CD8-positive, alpha-beta T cell (primary cell): ENCODE measurements at regions of chr21 and their contacts with region 1.

Region 1: DNA sequence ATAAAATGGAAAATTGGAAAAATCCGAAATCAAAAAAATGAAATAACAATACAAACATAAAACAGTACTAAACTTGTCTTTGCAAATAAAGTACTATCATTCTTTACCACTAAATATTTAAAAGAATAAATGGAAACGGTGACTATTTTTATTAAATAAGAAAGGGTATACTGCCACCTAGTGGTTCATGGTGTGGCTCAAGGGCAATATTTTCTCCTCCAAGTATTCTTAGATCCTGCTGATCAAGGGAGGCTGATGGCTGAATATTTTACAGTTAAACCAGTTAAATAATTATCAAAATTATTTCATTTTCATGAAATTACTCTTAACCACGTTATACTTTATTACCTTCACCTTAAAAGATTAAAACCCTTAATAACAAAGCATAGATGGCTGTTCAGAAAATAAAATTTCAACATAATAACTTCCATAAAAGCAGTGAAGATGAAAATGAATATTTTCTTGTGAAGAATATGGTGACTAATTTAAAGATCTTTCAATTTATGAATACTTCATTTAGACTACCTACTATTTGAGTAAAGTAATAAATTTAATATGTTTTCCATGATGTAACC is 1793.9 kb downstream of the NCAM2 start:
- DNase-seq: peak in 3 of 9 experiments; percentile 11 to 50 (median 32)
- ATAC-seq: peak; percentile 36
- H3K4me3 ChIP-seq: no peak overlapping the region
- H3K4me3 Mint-ChIP-seq: no peak overlapping the region
- H3K27ac ChIP-seq: no peak overlapping the region
- H3K27ac Mint-ChIP-seq: no peak overlapping the region
- H3K4me1 ChIP-seq: no peaks in the 10 kb centered on the region
- H3K4me1 Mint-ChIP-seq: no peaks in the 10 kb centered on the region
- H3K27me3 ChIP-seq: no peaks in the 10 kb centered on the region
- H3K27me3 Mint-ChIP-seq: no peaks in the 10 kb centered on the region
- CTCF ChIP-seq: peak; percentile 86

Region 2: DNA sequence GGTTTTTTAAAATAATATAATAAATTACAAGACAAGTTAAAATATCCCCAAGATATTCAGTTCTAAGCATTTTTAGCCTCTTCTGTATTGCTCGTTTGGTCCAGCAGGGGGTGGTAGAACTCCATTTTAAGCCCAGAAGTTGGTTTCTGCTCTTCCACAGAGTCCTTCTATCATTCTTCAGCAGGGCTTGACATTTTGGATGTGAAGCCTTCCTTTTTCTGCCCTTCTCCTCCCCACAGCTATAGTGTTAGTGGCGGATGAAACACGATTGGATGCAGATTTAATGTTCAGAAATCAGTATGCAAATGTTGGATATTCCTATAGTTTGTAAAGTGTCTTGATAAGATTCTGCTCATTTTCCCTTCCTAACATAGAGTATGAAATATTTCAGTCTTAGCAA is 1792.4 kb before region 1 on chr21:
- CTCF ChIA-PET with region 1: no interaction called
- POLR2A ChIA-PET with region 1: no interaction called
- intact Hi-C with region 1: loop called (anchors 5 kb)
- DNase-seq: peak in 3 of 9 experiments; percentile 15 to 36 (median 36)
- ATAC-seq: no peak
- H3K4me3 ChIP-seq: no peak overlapping the region
- H3K4me3 Mint-ChIP-seq: no peak overlapping the region
- H3K27ac ChIP-seq: no peak overlapping the region
- H3K27ac Mint-ChIP-seq: no peak overlapping the region
- H3K4me1 ChIP-seq: peaks cover 18% of the 10 kb centered on the region
- H3K4me1 Mint-ChIP-seq: peaks cover 13% of the 10 kb centered on the region
- H3K27me3 ChIP-seq: peaks cover 0 to 2% of the 10 kb centered on the region in 2 experiments
- H3K27me3 Mint-ChIP-seq: peaks cover 25% of the 10 kb centered on the region
- CTCF ChIP-seq: peak; percentile 46

Region 3: GRCh38 chr21:21163904-21164303 is 1628.2 kb before region 1 on chr21:
- CTCF ChIA-PET with region 1: interaction called, 4 read pairs
- POLR2A ChIA-PET with region 1: no interaction called
- intact Hi-C with region 1: loop called in 1 of 2 experiments (anchors 1 kb)
- DNase-seq: peak in 7 of 9 experiments; percentile 1 to 57 (median 23)
- ATAC-seq: no peak
- H3K4me3 ChIP-seq: no peak overlapping the region
- H3K4me3 Mint-ChIP-seq: no peak overlapping the region
- H3K27ac ChIP-seq: no peak overlapping the region
- H3K27ac Mint-ChIP-seq: no peak overlapping the region
- H3K4me1 ChIP-seq: no peaks in the 10 kb centered on the region
- H3K4me1 Mint-ChIP-seq: no peaks in the 10 kb centered on the region
- H3K27me3 ChIP-seq: no peaks in the 10 kb centered on the region
- H3K27me3 Mint-ChIP-seq: no peaks in the 10 kb centered on the region
- CTCF ChIP-seq: peak; percentile 57

Region 4: GRCh38 chr21:21664871-21665270 is 1127.2 kb before region 1 on chr21:
- CTCF ChIA-PET with region 1: no interaction called
- POLR2A ChIA-PET with region 1: no interaction called
- intact Hi-C with region 1: no loop called
- DNase-seq: no peak
- ATAC-seq: no peak
- H3K4me3 ChIP-seq: no peak overlapping the region
- H3K4me3 Mint-ChIP-seq: no peak overlapping the region
- H3K27ac ChIP-seq: no peak overlapping the region
- H3K27ac Mint-ChIP-seq: no peak overlapping the region
- H3K4me1 ChIP-seq: no peaks in the 10 kb centered on the region
- H3K4me1 Mint-ChIP-seq: no peaks in the 10 kb centered on the region
- H3K27me3 ChIP-seq: no peaks in the 10 kb centered on the region
- H3K27me3 Mint-ChIP-seq: no peaks in the 10 kb centered on the region
- CTCF ChIP-seq: no peak